ENCODE measurements at regions of chr7 and their contacts with region 1.

Region 1: GRCh38 chr7:4883374-4884144 is at the start of gene RADIL:
- DNase-seq: peak in 1 of 2 experiments; percentile 75
- H3K4me3 ChIP-seq: no peak within 1 kb of the TSS
- H3K27ac ChIP-seq: no peak within 1 kb of the TSS
- H3K4me1 ChIP-seq: no peaks in the 10 kb centered on the region
- H3K27me3 ChIP-seq: peaks cover 53% of the 10 kb centered on the region
- CTCF ChIP-seq: peak; percentile 41; the same call in 1 of the 2 replicates
- total RNA-seq, gene RADIL: 0.35 and 0.73 TPM in 2 replicates

Region 2: DNA sequence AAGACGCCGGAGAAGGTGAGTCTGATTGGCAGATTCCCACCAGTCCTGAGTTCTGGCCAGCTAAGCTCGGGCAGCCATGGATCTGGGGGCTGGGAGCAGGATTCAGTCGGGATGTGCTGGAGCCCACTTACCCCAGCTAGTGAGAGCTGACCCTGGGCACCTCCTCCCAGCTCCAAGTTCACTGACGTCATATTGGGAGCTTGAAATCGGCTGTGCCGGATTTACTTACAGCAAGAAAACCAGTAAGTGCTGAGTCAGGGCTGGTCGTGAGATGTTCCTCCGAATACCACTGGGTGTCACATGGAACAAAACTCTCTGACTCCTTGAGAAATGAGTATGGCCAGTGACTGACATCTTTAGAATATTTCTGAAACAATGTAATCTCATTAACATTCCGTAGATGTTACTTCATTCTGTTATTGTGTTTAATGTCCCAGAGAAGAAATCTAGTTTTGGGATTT is 961.4 kb before region 1 on chr7:
- CTCF ChIA-PET with region 1: interaction called, 10 read pairs
- POLR2A ChIA-PET with region 1: no interaction called
- intact Hi-C with region 1: no loop called
- DNase-seq: peak; percentile 3 to 76
- H3K4me3 ChIP-seq: no peak overlapping the region
- H3K27ac ChIP-seq: no peak overlapping the region
- H3K4me1 ChIP-seq: no peaks in the 10 kb centered on the region
- H3K27me3 ChIP-seq: peaks cover 74% of the 10 kb centered on the region
- CTCF ChIP-seq: peak; percentile 22; the same call in 1 of the 2 replicates

Region 3: DNA sequence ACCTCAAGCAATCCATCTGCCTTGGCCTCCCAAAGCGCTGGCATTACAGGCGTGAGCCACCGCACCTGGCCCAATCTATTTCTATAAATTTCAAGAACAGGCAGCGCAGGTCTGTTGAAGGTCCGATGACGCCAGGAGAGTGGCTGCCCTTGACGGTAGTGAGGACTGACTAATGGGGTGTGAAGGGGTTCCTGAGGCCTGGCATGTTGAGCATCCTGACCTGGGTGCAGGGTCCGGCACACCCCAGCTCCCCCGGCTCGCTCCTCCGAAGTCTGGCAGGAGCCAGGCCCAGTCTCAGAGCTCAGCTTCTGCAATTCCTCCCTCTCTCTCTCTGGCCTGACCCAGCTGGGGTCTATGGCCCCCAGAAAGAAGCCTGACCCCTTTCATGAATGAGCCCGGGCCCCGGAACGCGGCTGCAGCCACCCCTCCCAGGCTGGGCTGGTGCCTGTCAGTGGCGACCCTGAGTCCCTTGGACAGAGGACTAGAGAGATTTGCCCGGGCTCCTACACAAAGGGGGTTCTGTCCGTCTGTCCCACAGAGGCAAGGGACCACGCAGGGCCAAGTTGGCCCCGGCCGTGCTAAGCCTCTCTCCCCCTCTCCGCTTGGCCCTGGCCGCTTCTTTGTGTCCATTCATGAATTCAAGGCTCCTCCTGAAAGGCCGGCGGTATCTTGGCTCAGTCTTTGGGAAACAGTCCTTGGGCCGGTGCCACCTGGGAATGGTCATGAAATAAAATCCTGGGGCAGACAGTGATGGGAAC is 56.6 kb after region 1 on chr7:
- CTCF ChIA-PET with region 1: no interaction called
- POLR2A ChIA-PET with region 1: no interaction called
- intact Hi-C with region 1: no loop called
- DNase-seq: no peak
- H3K4me3 ChIP-seq: no peak overlapping the region
- H3K27ac ChIP-seq: no peak overlapping the region
- H3K4me1 ChIP-seq: no peaks in the 10 kb centered on the region
- H3K27me3 ChIP-seq: peaks cover 67% of the 10 kb centered on the region
- CTCF ChIP-seq: no peak